Activated CD4-positive, alpha-beta T cell treated with anti-CD3 and anti-CD28 coated beads, Interleukin-2, amount 10 ng/mL, durations not matched to agents 7 days and 5 days (primary cell): ENCODE measurements at regions of chr1 and their contacts with region 1.

Region 1: GRCh38 chr1:116842654-116843053 is 67.1 kb upstream of the PTGFRN start:
- DNase-seq: no peak
- H3K4me3 Mint-ChIP-seq: no peak overlapping the region
- H3K27ac Mint-ChIP-seq: no peak overlapping the region
- H3K4me1 Mint-ChIP-seq: peaks cover 8% of the 10 kb centered on the region
- H3K27me3 Mint-ChIP-seq: no peaks in the 10 kb centered on the region

Region 2: DNA sequence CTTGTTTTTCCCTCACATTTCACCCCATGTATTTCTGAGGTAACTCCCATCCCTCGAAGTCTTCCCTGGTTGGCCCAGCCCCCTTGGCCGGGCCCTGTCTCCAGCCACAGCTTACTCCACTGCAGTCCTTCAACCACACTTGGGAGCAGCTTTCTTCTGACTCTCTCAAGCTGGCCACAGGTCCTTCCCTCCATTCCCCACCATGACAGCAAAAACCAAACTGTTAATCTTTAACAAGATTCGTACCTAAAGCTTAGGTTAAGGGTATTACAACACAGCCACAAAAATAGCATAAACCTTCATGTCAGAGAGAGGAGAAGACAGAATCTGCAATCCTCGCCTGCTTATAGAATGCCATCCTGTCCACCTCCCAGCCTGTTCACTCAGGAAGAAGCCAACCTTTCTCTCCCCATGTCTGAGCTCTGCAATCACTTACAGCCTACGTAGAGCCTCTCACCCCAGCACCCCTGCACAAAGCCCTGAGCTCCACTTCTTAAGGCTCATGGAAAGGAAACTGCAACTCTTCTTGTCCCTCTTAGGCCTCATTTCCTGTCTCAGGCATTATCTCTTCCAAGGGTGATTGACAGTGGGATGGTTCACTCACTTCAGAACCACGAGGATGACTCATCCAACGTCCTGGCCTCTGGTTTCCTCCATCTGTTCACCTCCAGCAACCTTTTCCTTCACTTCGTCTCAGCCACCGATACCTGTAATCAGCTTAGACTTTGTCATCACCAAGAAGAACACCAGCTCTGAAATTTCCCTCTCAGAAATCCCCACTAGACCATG is 15.6 kb before region 1 on chr1:
- CTCF ChIA-PET with region 1: interaction called, 16 read pairs
- POLR2A ChIA-PET with region 1: no interaction called
- DNase-seq: peak; percentile 72
- H3K4me3 Mint-ChIP-seq: peak overlapping the region; percentile 31
- H3K27ac Mint-ChIP-seq: peak overlapping the region; percentile 91
- H3K4me1 Mint-ChIP-seq: peaks cover 50% of the 10 kb centered on the region
- H3K27me3 Mint-ChIP-seq: no peaks in the 10 kb centered on the region